Activated CD8-positive, alpha-beta T cell treated with anti-CD3 and anti-CD28 coated beads for 36 hours (primary cell): ENCODE measurements at regions of chr4 and their contacts with region 1.

Region 1: DNA sequence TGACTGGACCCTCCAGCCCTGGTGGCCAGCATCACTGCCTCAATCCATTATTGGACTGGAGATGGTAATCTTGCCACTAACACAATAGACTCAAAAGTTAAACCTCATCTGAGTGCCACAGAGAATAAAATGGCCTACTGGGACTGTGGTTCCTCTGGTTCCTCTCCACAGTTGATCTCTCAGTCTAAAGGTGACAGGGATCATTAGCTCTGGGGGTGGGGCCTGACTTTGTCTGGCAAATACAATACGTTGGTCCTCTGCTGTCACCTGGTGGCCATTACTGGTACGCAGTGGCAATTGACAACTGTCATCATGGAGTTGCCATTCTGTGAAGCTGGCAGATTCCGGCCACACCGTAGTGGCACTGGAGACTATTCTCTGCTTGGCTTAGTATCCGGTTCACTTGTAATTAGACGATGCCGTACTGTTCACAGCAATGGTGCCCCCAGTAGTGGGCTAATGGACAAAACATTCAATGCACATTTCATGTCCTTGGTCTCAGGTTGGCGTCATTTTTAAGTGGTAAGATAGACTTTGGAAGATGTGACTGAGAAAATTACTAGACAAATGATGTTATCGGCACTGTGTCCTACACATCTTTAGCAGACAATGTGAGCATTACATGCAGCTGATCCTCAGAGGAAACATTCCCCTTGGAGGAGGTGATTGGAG is 6.7 kb downstream of the FGFBP2 start:
- DNase-seq: peak; percentile 96
- ATAC-seq: peak; percentile 90
- H3K4me3 Mint-ChIP-seq: no peak overlapping the region
- H3K27ac Mint-ChIP-seq: no peak overlapping the region
- H3K4me1 Mint-ChIP-seq: peaks cover 19% of the 10 kb centered on the region
- H3K27me3 Mint-ChIP-seq: peaks cover 2% of the 10 kb centered on the region
- CTCF ChIP-seq: peak; percentile 87

Region 2: GRCh38 chr4:15400981-15401671 is 555.2 kb before region 1 on chr4:
- CTCF ChIA-PET with region 1: no interaction called
- POLR2A ChIA-PET with region 1: no interaction called
- intact Hi-C with region 1: no loop called
- DNase-seq: peak; percentile 68
- ATAC-seq: peak; percentile 84
- H3K4me3 Mint-ChIP-seq: peak overlapping the region; percentile 61
- H3K27ac Mint-ChIP-seq: peak overlapping the region; percentile 85
- H3K4me1 Mint-ChIP-seq: peaks cover 32% of the 10 kb centered on the region
- H3K27me3 Mint-ChIP-seq: no peaks in the 10 kb centered on the region
- CTCF ChIP-seq: no peak

Region 3: GRCh38 chr4:15479089-15479912 is 477.0 kb before region 1 on chr4:
- CTCF ChIA-PET with region 1: interaction called, 4 read pairs
- POLR2A ChIA-PET with region 1: no interaction called
- intact Hi-C with region 1: loop called (anchors 2 kb)
- DNase-seq: peak; percentile 11
- ATAC-seq: no peak
- H3K4me3 Mint-ChIP-seq: no peak overlapping the region
- H3K27ac Mint-ChIP-seq: no peak overlapping the region
- H3K4me1 Mint-ChIP-seq: no peaks in the 10 kb centered on the region
- H3K27me3 Mint-ChIP-seq: no peaks in the 10 kb centered on the region
- CTCF ChIP-seq: peak; percentile 62

Region 4: GRCh38 chr4:15495621-15496020 is 460.7 kb before region 1 on chr4:
- CTCF ChIA-PET with region 1: no interaction called
- POLR2A ChIA-PET with region 1: no interaction called
- intact Hi-C with region 1: no loop called
- DNase-seq: no peak
- ATAC-seq: no peak
- H3K4me3 Mint-ChIP-seq: no peak overlapping the region
- H3K27ac Mint-ChIP-seq: no peak overlapping the region
- H3K4me1 Mint-ChIP-seq: no peaks in the 10 kb centered on the region
- H3K27me3 Mint-ChIP-seq: no peaks in the 10 kb centered on the region
- CTCF ChIP-seq: no peak

Region 5: DNA sequence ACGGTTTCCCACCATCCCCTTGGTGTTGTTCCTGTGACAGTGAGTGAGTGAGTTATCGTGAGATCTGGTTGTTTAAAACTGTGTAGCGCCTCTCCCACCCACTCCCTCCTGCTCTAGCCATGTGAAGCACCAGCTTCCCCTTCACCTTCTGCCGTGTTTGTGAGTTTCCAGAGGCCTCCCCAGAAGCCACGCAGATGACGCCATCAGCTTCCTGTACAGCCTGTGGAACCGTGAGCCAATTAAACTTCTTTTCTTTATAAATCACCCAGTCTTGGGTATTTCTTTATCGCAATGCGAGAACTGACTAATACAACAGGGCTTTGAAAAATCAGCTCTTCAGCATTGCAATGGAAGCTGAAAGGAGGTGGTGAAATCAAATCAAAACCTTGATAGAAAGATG is 67.8 kb before region 1 on chr4:
- CTCF ChIA-PET with region 1: interaction called, 203 read pairs
- POLR2A ChIA-PET with region 1: interaction called, 9 read pairs
- intact Hi-C with region 1: no loop called
- DNase-seq: peak; percentile 32
- ATAC-seq: peak; percentile 20
- H3K4me3 Mint-ChIP-seq: no peak overlapping the region
- H3K27ac Mint-ChIP-seq: no peak overlapping the region
- H3K4me1 Mint-ChIP-seq: no peaks in the 10 kb centered on the region
- H3K27me3 Mint-ChIP-seq: peaks cover 2% of the 10 kb centered on the region
- CTCF ChIP-seq: no peak